GM10248 (cell line): ENCODE measurements at regions of chr12 and their contacts with region 1.

Region 1: DNA sequence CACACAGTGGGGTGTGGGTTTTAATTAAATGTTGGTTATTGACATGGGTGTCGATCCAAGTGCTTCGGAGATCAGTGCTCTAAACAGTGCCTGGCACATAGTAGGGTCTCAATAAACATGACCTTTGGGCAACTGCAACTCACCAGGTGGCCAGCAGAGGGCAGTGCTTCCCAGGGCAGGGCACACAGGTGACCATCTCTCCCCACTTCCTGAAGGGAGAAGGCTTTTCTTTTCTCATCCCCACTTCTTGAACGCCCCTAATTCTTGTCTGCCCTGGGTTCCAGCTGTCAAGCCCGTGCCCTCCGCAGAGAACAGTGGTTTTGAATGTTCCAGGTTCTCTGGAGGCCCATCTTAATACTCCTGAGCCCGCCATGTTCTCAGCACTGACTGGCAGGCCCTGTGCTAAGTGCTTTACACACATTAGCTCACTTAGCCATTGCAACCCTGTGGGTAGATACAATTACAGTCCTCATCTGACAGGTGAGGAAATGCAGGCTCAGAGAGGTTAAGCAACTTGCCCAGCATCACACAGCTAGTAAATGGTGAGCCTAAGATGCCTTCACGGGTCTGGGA is 16.3 kb downstream of the RAPGEF3 start:
- DNase-seq: peak; percentile 64
- CTCF ChIP-seq: peak; percentile 92

Region 2: GRCh38 chr12:47419497-47419896 is 322.8 kb before region 1 on chr12:
- CTCF ChIA-PET with region 1: no interaction called
- POLR2A ChIA-PET with region 1: no interaction called
- DNase-seq: no peak
- CTCF ChIP-seq: no peak

Region 3: DNA sequence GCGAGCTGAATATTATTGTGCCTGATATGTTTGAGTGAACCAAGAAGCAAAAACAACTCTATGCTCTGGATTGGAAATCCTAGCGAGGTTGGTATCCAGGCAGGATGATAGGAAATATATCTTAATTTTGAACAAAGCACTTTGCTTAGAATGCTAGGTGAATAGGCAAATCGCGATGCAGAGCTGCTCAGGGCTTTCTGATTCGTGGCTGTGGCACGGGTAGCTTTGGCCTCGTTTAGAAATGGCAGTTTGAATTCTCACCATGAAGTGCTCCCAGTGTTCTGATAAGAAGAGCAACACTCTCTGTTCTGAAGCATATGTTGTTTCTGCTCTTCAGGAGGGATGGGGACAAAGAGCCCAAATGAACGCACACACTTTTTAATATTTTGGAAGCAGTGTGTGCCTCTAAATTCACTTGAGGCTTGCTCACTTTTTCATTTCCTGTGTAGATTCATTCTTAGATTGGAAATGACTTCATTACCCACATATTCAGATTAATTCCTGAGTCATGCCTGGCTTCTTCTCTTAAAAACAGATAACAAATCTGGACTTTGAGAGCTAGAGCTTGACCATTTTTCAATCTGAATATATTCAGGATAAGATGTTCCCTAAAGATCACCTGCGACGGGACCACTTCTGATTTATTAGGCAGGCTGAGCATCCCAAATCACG is 237.4 kb before region 1 on chr12:
- CTCF ChIA-PET with region 1: no interaction called
- POLR2A ChIA-PET with region 1: no interaction called
- DNase-seq: no peak
- CTCF ChIP-seq: no peak

Region 4: GRCh38 chr12:47715393-47715876 is 26.9 kb before region 1 on chr12:
- CTCF ChIA-PET with region 1: interaction called, 225 read pairs
- POLR2A ChIA-PET with region 1: interaction called, 4 read pairs
- DNase-seq: peak; percentile 77
- CTCF ChIP-seq: peak; percentile 83

Region 5: GRCh38 chr12:47758834-47759690 is 16.7 kb after region 1 on chr12 and contains the start of gene RAPGEF3:
- CTCF ChIA-PET with region 1: interaction called, 448 read pairs
- POLR2A ChIA-PET with region 1: interaction called, 5 read pairs
- DNase-seq: peak; percentile 86
- CTCF ChIP-seq: peak; percentile 68

Region 6: DNA sequence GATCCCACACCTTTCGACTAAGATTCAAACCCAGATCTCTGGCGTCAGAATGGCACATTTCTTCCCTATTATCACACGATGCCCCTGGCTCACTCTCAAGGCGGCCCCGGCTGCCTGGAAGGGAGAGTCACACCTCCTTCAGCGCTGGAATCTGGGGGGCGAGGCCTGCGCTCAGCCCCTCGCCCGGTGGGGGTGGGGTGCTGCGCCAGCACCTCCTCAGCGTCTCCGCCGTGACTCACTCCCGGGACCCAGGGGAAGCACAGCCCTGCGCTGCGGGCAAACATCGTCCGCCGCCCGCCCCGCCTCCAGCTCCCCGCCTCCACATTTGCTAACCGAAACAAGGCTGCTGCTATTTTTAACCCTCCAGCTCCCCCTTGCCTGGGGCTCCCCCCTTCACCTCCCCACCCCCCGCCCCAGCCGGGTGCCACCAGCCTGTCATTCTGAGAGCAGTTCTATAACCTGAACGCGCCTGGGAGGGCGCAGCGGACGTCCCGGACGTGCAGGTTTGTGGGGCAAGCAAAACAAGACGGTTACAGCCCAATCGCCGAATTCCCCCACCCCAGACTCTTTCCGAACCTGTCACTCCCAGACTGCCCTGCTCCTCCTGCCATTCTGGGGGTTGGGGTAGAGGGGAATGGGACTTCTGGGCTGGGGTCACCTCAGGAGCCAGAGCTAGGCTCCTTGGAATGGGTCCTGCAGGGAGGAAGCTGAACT is 70.6 kb after region 1 on chr12:
- CTCF ChIA-PET with region 1: interaction called, 26 read pairs
- POLR2A ChIA-PET with region 1: no interaction called
- DNase-seq: peak; percentile 93
- CTCF ChIP-seq: no peak

Region 7: GRCh38 chr12:47844274-47845019 is 102.1 kb after region 1 on chr12:
- CTCF ChIA-PET with region 1: interaction called, 230 read pairs
- POLR2A ChIA-PET with region 1: no interaction called
- DNase-seq: no peak
- CTCF ChIP-seq: no peak